ENCODE measurements at regions of chr21 and their contacts with region 1.

Region 1: DNA sequence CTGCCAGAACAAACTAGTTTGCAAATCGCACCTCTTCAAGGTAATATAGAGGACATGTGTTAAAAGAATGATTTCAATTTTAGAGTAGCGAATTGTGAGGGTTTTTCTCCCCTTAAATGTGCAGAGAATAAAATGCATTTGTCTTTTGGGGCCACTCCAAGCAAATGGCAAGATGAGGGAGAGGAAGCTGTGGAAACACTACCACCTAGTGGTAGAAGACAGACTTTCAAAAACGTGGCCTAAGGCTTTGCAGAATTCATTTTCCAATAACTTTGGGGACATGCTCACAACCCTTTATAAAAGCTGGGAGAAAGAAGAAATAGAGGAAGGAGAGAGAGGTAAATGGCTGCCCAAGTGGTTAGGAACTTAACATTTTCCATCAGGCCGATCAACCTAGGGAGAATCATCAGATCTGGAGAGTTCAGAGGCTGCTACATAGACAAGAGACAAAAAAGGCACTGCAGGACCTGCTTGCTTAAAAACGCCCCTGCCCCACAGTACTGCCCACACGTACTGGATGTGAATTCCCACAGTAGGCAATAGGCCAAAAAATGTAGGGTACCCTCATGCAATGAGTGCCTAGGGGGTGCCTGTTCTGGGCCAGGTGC is 15.7 kb upstream of the RCAN1 start:
- DNase-seq: peak; percentile 40 to 41
- ATAC-seq: peak; percentile 56 to 82; a peak in 4 of 6 replicates
- H3K4me3 ChIP-seq: no peak overlapping the region
- H3K27ac ChIP-seq: no peak overlapping the region
- H3K4me1 ChIP-seq: no peaks in the 10 kb centered on the region
- CTCF ChIP-seq: peak; percentile 66
- EP300 ChIP-seq: no peak
- POLR2A ChIP-seq: no peak
- RAD21 ChIP-seq: peak; percentile 77 to 80

Region 2: DNA sequence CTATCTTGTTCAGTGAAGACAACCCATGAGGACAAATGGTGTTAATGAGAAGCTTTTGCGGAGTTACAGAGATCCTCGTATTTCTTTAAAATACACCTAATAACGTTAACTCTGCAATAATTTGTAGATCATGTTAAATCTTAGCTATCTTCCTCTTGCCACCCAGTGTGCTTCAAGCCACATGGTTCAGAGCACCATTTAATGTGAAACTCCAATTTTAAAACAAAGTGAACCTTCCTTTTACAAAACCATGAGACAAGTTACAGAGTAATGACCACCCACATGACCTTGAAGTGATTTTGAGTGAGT is 268.6 kb before region 1 on chr21:
- CTCF ChIA-PET with region 1: interaction called, 17 read pairs
- POLR2A ChIA-PET with region 1: no interaction called
- DNase-seq: no peak
- ATAC-seq: peak in 1 of 2 experiments; percentile 23; a peak in 2 of 6 replicates
- H3K4me3 ChIP-seq: no peak overlapping the region
- H3K27ac ChIP-seq: no peak overlapping the region
- H3K4me1 ChIP-seq: 0 out of 3 replicates have a peak, but pooled peaks cover 2% of the 10 kb centered on the region
- CTCF ChIP-seq: no peak; the same call in 2 of the 3 replicates
- EP300 ChIP-seq: no peak
- POLR2A ChIP-seq: no peak
- RAD21 ChIP-seq: no peak; a peak in 1 of 5 replicates

Region 3: DNA sequence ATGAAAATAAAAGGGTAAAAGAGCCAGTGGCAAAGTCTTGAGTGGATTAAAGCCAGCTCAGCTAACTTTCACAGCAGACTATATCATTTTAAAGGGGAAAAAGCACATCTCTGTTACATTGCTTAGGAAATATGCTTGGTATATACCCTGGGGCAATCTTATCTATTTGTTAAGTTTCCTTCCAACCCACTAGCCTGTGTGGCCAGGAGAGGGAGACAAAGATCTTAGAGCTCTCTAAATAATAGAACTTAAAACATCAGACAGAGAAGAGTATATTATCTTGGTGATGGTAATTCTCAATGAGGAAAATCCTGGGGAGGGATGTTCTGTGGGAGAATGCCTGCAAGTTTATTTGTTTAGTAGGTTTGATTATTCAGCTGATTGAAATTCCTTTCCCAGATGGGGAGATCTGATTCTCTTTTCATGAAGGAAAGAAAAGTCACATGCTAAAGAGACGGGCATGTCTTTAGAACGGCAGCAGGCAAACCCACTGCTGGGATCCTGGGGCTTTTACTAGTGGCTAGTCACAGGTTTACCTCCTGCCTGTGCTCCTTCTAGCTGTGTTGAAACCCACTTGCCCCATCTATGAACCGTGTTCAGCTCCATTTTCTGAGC is 263.2 kb before region 1 on chr21:
- CTCF ChIA-PET with region 1: interaction called, 17 read pairs
- POLR2A ChIA-PET with region 1: no interaction called
- DNase-seq: peak; percentile 26 to 74
- ATAC-seq: peak; percentile 81 to 91; a peak in 5 of 6 replicates
- H3K4me3 ChIP-seq: no peak overlapping the region
- H3K27ac ChIP-seq: no peak overlapping the region
- H3K4me1 ChIP-seq: 0 out of 3 replicates have a peak, but pooled peaks cover 4% of the 10 kb centered on the region
- CTCF ChIP-seq: peak; percentile 56
- EP300 ChIP-seq: no peak
- POLR2A ChIP-seq: no peak
- RAD21 ChIP-seq: peak; percentile 48 to 52; a peak in 4 of 5 replicates

Region 4: GRCh38 chr21:34582506-34583150 is 48.0 kb before region 1 on chr21:
- CTCF ChIA-PET with region 1: no interaction called
- POLR2A ChIA-PET with region 1: no interaction called
- DNase-seq: peak; percentile 8 to 28
- ATAC-seq: peak; percentile 73 to 93
- H3K4me3 ChIP-seq: no peak overlapping the region
- H3K27ac ChIP-seq: 0 out of 6 replicates have a peak overlapping the region, but pooled peaks of 1 of the 2 experiments have one; percentile 9
- H3K4me1 ChIP-seq: no peaks in the 10 kb centered on the region
- CTCF ChIP-seq: peak; percentile 33; the same call in 2 of the 3 replicates
- EP300 ChIP-seq: no peak
- POLR2A ChIP-seq: no peak
- RAD21 ChIP-seq: peak; percentile 32 to 53; a peak in 4 of 5 replicates

Region 5: GRCh38 chr21:34649400-34649799 is 18.8 kb after region 1 on chr21:
- CTCF ChIA-PET with region 1: interaction called, 13 read pairs
- POLR2A ChIA-PET with region 1: no interaction called
- DNase-seq: no peak
- ATAC-seq: no peak
- H3K4me3 ChIP-seq: no peak overlapping the region
- H3K27ac ChIP-seq: no peak overlapping the region
- H3K4me1 ChIP-seq: no peaks in the 10 kb centered on the region
- CTCF ChIP-seq: no peak
- EP300 ChIP-seq: no peak
- POLR2A ChIP-seq: no peak
- RAD21 ChIP-seq: no peak